ENCODE measurements at regions of chr5 and their contacts with region 1.

Region 1: GRCh38 chr5:3002230-3002629 is 250.8 kb upstream of the IRX2 start:
- DNase-seq: no peak
- ATAC-seq: no peak

Region 2: DNA sequence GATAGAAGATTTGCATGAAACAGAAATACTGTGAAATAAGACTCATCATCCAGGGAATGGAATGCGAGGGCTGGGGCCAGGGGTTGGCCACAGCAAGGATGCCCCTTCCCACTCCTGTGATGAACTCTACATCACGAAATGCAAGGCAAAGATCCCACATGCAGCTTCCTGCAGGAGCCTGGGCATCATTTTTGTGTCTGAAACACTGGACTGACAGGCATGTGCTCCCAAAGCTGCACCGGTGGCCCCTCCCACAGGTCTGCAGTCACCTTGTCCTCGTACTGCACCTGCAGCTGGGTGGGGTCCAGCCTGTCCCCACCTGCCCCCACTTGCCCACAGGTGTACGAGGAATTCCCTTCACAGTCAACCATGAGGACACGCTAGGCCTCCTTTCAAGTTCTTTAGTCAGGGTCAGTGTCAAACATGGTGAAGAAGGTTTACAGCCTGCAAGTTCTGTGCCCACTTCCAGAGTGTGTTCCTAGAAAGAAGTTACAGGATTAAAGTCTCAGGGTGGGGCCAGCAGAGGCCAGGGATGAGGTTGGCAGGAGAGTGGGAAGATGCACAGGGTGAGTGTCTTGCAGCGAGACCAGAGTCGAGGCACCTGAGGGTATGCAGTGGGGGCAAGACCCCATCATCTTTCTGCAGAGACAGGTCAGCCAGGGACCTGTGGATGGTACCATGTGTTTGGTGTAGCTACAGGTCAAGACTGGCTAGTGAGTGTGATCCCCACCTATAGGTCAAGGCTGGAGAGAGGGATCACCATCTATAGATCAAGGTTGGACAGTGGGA is 95.7 kb before region 1 on chr5:
- intact Hi-C with region 1: no loop called
- DNase-seq: no peak
- ATAC-seq: no peak

Region 3: DNA sequence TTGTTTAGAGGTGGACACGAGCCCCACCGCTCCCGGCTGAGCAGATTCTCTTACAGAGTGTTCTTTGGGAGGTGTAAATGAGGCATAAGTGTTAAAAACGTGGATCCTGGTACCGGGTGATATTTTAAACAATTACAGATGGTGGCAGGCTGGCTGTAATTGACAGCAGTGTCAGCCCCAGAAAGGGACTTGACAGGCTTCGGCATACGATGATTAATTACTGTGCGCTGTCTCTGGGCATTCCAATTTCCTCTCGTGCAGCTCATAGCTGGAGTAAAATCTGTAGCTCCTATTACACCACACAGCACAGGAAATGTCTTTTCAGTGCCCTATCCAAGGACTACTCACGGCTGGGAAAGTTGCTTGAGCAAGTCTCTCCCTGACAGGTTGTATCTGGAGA is 54.6 kb after region 1 on chr5:
- intact Hi-C with region 1: loop called (anchors 2 kb)
- DNase-seq: no peak
- ATAC-seq: no peak